ENCODE measurements at regions of chr14 and their contacts with region 1.

Region 1: DNA sequence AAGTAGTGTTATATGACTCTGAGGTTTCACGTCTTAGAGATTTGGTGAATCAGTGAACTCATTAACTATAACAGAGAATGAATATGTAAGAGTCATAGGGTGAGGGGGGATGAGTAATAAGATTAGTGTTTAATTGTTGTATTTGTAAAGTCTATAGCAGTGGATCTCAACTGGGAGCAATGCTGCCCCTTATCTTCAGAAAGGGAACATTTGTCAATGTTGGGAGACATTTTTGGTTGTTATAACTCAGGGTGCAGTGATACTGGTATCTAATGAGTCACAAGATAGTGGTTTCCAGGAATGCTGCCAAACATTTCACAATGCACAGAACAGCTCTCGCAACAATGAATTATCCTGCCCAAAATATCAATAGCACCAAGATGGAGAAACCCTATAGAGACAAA is 1193.7 kb downstream of the GALC start:
- DNase-seq: no peak
- ATAC-seq: no peak
- H3K4me3 ChIP-seq: no peak overlapping the region
- H3K27ac ChIP-seq: no peak overlapping the region
- H3K4me1 ChIP-seq: no peaks in the 10 kb centered on the region
- H3K27me3 ChIP-seq: no peaks in the 10 kb centered on the region
- CTCF ChIP-seq: no peak
- POLR2A ChIP-seq: no peak

Region 2: GRCh38 chr14:86815341-86815740 is 16.1 kb after region 1 on chr14:
- in situ Hi-C with region 1: no loop called
- intact Hi-C with region 1: loop called (anchors 1 kb)
- DNase-seq: no peak
- ATAC-seq: no peak
- H3K4me3 ChIP-seq: no peak overlapping the region
- H3K27ac ChIP-seq: no peak overlapping the region
- H3K4me1 ChIP-seq: no peaks in the 10 kb centered on the region
- H3K27me3 ChIP-seq: no peaks in the 10 kb centered on the region
- CTCF ChIP-seq: no peak
- POLR2A ChIP-seq: no peak

Region 3: DNA sequence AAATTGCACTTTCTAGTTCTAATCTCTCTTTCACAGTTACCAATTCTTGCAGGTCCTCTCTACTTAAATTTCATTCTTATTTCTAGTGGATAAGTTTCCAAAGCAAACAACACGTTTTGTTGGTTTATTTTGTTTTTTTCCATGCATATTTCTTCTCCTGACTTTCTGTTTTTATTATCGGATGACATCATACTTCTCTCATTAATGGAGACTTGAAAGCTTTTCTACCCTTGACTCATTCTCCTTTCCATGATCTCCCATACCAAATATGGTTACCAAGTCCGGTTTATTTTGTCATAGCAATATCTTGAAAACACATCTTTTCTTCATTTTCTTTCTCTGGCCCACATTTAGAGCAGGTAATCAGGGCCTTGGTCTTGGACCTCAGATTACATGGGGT is 397.2 kb after region 1 on chr14:
- in situ Hi-C with region 1: no loop called
- intact Hi-C with region 1: no loop called
- DNase-seq: no peak
- ATAC-seq: no peak
- H3K4me3 ChIP-seq: no peak overlapping the region
- H3K27ac ChIP-seq: no peak overlapping the region
- H3K4me1 ChIP-seq: no peaks in the 10 kb centered on the region
- H3K27me3 ChIP-seq: no peaks in the 10 kb centered on the region
- CTCF ChIP-seq: no peak
- POLR2A ChIP-seq: no peak